OCI-LY7 (cell line): ENCODE measurements at regions of chr2 and their contacts with region 1.

Region 1: DNA sequence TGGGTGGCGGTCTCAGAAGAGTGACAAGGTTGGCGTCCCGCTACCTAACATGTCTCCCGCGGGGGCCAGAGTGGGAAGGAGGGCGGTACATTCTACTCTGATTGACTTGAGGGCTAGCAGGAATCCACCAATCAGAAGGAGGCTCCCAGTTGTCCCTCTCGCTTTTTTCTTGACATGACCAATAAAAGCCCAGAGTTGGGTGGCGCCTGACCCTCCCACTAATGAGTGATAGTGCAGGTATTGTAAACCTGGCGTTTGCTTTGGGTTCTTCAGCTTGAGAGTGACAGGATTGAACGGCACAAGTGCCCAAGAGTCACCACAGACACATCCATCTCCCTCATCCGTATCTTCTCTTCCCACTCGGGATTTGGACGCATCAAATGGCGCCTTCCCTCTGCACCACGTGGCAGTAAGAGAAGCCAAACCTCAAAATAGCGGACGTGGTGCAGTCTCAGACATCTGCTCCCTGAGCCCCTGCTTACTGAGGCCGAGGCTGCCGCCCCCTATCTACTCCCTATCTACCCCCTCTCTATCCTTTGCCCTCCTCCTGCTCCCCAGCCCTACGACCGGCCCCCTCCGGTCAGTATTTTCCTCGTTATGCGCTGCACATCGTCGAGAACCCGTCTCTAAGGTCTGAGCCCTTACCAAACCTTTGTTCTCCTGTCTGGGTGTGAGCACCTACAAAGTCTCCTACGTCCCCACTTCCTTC is 768 bp upstream of the FAM161A start:
- DNase-seq: peak; percentile 97
- H3K4me3 ChIP-seq: peak overlapping the region; percentile 74
- H3K27ac ChIP-seq: peak overlapping the region; percentile 59
- H3K4me1 ChIP-seq: peaks cover 20% of the 10 kb centered on the region
- CTCF ChIP-seq: no peak

Region 2: GRCh38 chr2:61633250-61633649 is 221.4 kb before region 1 on chr2:
- CTCF ChIA-PET with region 1: no interaction called
- POLR2A ChIA-PET with region 1: no interaction called
- intact Hi-C with region 1: no loop called
- DNase-seq: no peak
- H3K4me3 ChIP-seq: no peak overlapping the region
- H3K27ac ChIP-seq: no peak overlapping the region
- H3K4me1 ChIP-seq: no peaks in the 10 kb centered on the region
- CTCF ChIP-seq: peak; percentile 53; the same call in 1 of the 2 replicates

Region 3: GRCh38 chr2:61775956-61776570 is 78.6 kb before region 1 on chr2:
- CTCF ChIA-PET with region 1: no interaction called
- POLR2A ChIA-PET with region 1: no interaction called
- intact Hi-C with region 1: no loop called
- DNase-seq: peak; percentile 81
- H3K4me3 ChIP-seq: peak overlapping the region; percentile 51
- H3K27ac ChIP-seq: peak overlapping the region; percentile 72
- H3K4me1 ChIP-seq: peaks cover 29% of the 10 kb centered on the region
- CTCF ChIP-seq: no peak

Region 4: GRCh38 chr2:61888267-61889055 is 33.8 kb after region 1 on chr2 and contains the start of gene CCT4:
- CTCF ChIA-PET with region 1: no interaction called
- POLR2A ChIA-PET with region 1: interaction called, 5 read pairs
- intact Hi-C with region 1: loop called (anchors 1 kb)
- DNase-seq: peak; percentile 90
- H3K4me3 ChIP-seq: peak within 1 kb of the TSS; percentile 88
- H3K27ac ChIP-seq: peak within 1 kb of the TSS; percentile 64
- H3K4me1 ChIP-seq: peaks cover 22% of the 10 kb centered on the region
- CTCF ChIP-seq: no peak
- total RNA-seq, gene CCT4: 144 and 196 TPM in 2 replicates

Region 5: GRCh38 chr2:62415019-62415431 is 560.4 kb after region 1 on chr2:
- CTCF ChIA-PET with region 1: no interaction called
- POLR2A ChIA-PET with region 1: no interaction called
- intact Hi-C with region 1: no loop called
- DNase-seq: peak; percentile 21
- H3K4me3 ChIP-seq: no peak overlapping the region
- H3K27ac ChIP-seq: no peak overlapping the region
- H3K4me1 ChIP-seq: peaks cover 20% of the 10 kb centered on the region
- CTCF ChIP-seq: no peak